CD14-positive monocyte (primary cell): ENCODE measurements at regions of chr5 and their contacts with region 1.

Region 1: GRCh38 chr5:90529194-90529938 is at the start of gene LYSMD3:
- DNase-seq: peak; percentile 95 to 98 (median 98)
- H3K4me3 ChIP-seq: peak within 1 kb of the TSS; percentile 75 to 97 (median 89)
- H3K4me3 Mint-ChIP-seq: peak within 1 kb of the TSS; percentile 98 to 99
- H3K27ac ChIP-seq: peak within 1 kb of the TSS; percentile 80 to 96
- H3K27ac Mint-ChIP-seq: peak within 1 kb of the TSS; percentile 92 to 99 (median 98)
- H3K4me1 ChIP-seq: peaks cover 15 to 34% of the 10 kb centered on the region in 2 donors
- H3K4me1 Mint-ChIP-seq: peaks cover 26% of the 10 kb centered on the region
- H3K27me3 ChIP-seq: no peaks in the 10 kb centered on the region
- H3K27me3 Mint-ChIP-seq: peaks cover 0 to 3% (median 2%) of the 10 kb centered on the region in 3 donors
- CTCF ChIP-seq: no peak
- polyA plus RNA-seq, gene LYSMD3: 6.0 to 12.1 (median 8.4) TPM

Region 2: GRCh38 chr5:90301248-90301647 is 228.1 kb before region 1 on chr5:
- intact Hi-C with region 1: no loop called
- DNase-seq: no peak
- H3K4me3 ChIP-seq: no peak overlapping the region
- H3K4me3 Mint-ChIP-seq: no peak overlapping the region
- H3K27ac ChIP-seq: no peak overlapping the region
- H3K27ac Mint-ChIP-seq: no peak overlapping the region
- H3K4me1 ChIP-seq: no peaks in the 10 kb centered on the region
- H3K4me1 Mint-ChIP-seq: no peaks in the 10 kb centered on the region
- H3K27me3 ChIP-seq: no peaks in the 10 kb centered on the region
- H3K27me3 Mint-ChIP-seq: peaks cover 0 to 2% (median 2%) of the 10 kb centered on the region in 3 donors
- CTCF ChIP-seq: no peak

Region 3: GRCh38 chr5:90409318-90410177 is 119.8 kb before region 1 on chr5 and contains the start of gene CETN3:
- intact Hi-C with region 1: loop called (anchors 5 to 10 kb)
- DNase-seq: peak; percentile 92 to 96 (median 93)
- H3K4me3 ChIP-seq: peak within 1 kb of the TSS; percentile 84 to 100 (median 94)
- H3K4me3 Mint-ChIP-seq: no peak within 1 kb of the TSS
- H3K27ac ChIP-seq: peak within 1 kb of the TSS; percentile 83 to 96
- H3K27ac Mint-ChIP-seq: no peak within 1 kb of the TSS
- H3K4me1 ChIP-seq: peaks cover 13 to 19% of the 10 kb centered on the region in 2 donors
- H3K4me1 Mint-ChIP-seq: peaks cover 3% of the 10 kb centered on the region
- H3K27me3 ChIP-seq: no peaks in the 10 kb centered on the region
- H3K27me3 Mint-ChIP-seq: peaks cover 0 to 6% (median 0%) of the 10 kb centered on the region in 3 donors
- CTCF ChIP-seq: no peak
- polyA plus RNA-seq, gene CETN3: 0.59 to 9.0 (median 7.7) TPM